ENCODE measurements at regions of chr1 and their contacts with region 1.

Region 1: GRCh38 chr1:105793536-105794146 is 1262.8 kb upstream of the PRMT6 start:
- DNase-seq: peak; percentile 50
- ATAC-seq: no peak
- H3K4me3 Mint-ChIP-seq: no peak overlapping the region
- H3K27ac Mint-ChIP-seq: no peak overlapping the region
- H3K4me1 Mint-ChIP-seq: no peaks in the 10 kb centered on the region
- H3K27me3 Mint-ChIP-seq: no peaks in the 10 kb centered on the region

Region 2: GRCh38 chr1:104648269-104648691 is 1145.4 kb before region 1 on chr1:
- CTCF ChIA-PET with region 1: no interaction called
- POLR2A ChIA-PET with region 1: no interaction called
- intact Hi-C with region 1: loop called in 1 of 2 experiments (anchors 10 kb)
- DNase-seq: no peak
- ATAC-seq: no peak
- H3K4me3 Mint-ChIP-seq: no peak overlapping the region
- H3K27ac Mint-ChIP-seq: no peak overlapping the region
- H3K4me1 Mint-ChIP-seq: no peaks in the 10 kb centered on the region
- H3K27me3 Mint-ChIP-seq: no peaks in the 10 kb centered on the region

Region 3: DNA sequence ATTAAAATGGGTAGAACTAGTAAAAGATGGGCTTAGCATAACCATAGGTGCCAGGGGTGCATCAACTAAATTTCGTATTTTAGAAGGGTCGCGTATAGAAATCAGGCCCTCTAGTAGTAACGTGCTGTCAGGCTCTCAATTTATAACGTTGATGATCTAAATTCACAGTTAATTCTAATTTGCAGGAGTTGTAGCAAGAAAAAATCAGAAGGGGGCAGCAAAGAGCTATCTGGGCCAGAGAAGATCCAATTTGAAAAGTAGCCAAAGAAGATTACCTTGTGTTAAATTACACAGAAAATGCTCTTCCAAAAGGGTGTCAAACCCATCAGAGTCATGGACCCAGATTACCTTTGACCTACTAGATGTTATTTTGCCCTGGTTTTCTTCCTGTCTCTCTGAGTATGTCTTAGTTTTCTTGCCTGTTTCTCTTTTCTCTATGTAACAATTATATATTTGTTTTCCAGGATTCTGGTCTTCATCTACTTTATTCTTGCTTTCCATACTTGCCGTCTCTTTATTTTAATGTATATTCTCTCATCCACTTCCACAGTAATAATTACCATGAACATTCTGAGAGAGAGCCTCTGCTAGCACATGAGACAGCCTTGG is 1013.1 kb before region 1 on chr1:
- CTCF ChIA-PET with region 1: interaction called, 4 read pairs
- POLR2A ChIA-PET with region 1: no interaction called
- intact Hi-C with region 1: loop called (anchors 5 to 10 kb)
- DNase-seq: peak; percentile 11
- ATAC-seq: no peak
- H3K4me3 Mint-ChIP-seq: no peak overlapping the region
- H3K27ac Mint-ChIP-seq: no peak overlapping the region
- H3K4me1 Mint-ChIP-seq: no peaks in the 10 kb centered on the region
- H3K27me3 Mint-ChIP-seq: no peaks in the 10 kb centered on the region

Measured in activated CD4-positive, alpha-beta T cell treated with anti-CD3 and anti-CD28 coated beads for 36 hours (primary cell).